ENCODE measurements at regions of chr14 and their contacts with region 1.

Region 1: DNA sequence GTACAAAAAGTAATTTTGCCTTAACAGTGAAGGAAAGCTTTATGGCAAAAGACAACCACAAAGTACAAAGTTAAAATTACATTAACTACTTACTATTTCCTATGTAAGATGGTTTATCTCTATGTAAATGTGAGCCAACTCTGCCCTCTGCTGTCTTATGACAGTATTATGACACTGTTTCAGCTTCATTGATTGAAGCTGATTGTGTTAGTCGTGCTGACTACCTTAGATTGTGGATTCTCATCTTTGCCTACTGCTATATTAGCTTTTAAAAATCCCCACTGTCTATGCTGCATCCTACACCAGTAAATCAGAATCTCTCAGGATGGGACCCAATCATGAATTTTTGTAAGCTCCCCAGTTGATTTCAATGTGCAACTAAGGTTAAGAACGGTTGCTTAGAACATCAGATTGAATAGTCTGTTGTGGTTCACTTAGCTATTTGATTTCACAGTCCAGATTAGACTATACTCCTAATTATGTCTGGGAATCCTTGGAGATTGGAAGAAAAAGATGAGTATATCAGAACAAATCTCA is 12.2 kb upstream of the SPTB start:
- DNase-seq: peak; percentile 38
- H3K4me3 ChIP-seq: no peak overlapping the region
- CTCF ChIP-seq: peak; percentile 38

Region 2: DNA sequence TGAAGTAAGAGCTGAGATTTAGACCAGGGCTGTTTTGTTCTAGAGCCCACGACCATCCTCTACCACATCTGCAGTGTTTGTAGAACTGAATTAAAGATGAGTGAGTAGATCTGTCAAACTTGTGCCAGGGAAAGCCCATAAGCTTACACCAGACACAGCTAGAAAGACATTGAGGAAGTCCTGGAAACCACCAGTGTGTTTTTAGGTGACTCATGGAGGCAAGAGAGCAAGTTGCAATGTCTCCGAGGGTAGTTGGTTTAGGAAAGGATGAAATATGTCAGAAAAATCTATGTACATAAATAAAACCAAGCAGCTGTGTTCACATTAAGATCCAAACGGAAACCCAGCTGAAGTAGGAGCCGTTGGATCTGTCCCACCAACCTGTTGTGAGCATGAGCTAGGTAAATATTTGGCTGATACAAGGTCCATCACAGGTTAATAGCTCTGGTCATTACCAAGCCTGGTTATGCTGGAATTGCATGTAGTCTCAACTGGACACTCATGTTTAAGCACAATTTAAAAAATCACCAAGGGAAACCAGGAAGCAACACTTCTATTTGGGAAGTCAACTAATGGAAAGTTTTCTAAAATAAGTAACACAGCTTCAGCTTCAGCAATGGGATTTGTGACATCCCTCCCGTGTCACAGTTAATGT is 237.5 kb before region 1 on chr14:
- CTCF ChIA-PET with region 1: interaction called, 10 read pairs
- POLR2A ChIA-PET with region 1: no interaction called
- DNase-seq: peak; percentile 87
- H3K4me3 ChIP-seq: no peak overlapping the region
- CTCF ChIP-seq: no peak

Region 3: DNA sequence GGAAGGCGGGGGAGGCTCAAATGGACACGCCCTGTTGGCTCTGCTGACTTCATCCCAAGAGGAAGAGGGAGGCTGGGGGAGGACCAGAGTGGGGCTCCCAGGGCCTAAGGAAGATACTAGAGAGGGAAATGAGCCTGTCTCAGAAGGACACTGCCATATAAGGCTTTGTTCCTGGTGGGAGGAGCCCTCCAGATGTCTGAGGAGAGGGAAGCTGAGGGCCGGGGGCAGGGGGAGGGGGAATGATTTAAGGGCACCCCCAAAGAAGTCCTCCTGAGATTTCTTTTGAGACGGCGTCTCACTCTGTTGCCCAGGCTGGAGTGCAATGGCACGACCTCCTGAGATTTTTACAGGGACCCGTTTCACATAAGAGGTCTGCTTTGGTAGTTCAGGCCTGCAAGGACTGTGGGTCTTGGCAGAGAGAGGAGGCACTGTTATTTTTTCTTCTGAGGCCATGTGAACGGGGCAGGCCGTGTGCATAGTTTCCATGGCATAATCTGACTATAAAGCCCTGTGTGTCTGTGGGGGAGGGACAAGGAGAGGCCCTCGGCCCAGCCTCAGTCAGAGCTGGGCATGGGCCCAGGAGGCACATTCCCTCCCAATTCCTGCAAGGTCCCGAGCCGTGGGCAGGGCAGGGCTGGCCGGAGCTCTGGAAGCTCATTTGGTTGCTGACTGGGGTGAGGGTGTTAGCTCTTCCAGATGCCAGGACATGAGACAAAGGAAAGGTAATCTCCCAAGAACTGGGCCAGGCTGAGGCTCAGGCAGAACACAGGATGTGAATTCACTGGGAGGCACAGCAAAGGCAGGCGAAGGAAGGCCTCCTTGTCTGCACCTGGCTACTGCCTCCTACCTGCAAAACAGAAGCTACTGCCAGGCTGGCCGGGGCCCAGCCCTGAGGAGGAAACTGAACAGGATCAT is 209.9 kb before region 1 on chr14:
- CTCF ChIA-PET with region 1: interaction called, 52 read pairs
- POLR2A ChIA-PET with region 1: no interaction called
- DNase-seq: no peak
- H3K4me3 ChIP-seq: no peak overlapping the region
- CTCF ChIP-seq: no peak

Region 4: GRCh38 chr14:64800000-64800399 is 91.9 kb before region 1 on chr14:
- CTCF ChIA-PET with region 1: interaction called, 221 read pairs
- POLR2A ChIA-PET with region 1: no interaction called
- DNase-seq: no peak
- H3K4me3 ChIP-seq: no peak overlapping the region
- CTCF ChIP-seq: peak; percentile 58

Region 5: GRCh38 chr14:64823305-64823861 is 68.5 kb before region 1 on chr14:
- CTCF ChIA-PET with region 1: interaction called, 419 read pairs
- POLR2A ChIA-PET with region 1: interaction called, 3 read pairs
- DNase-seq: no peak
- H3K4me3 ChIP-seq: no peak overlapping the region
- CTCF ChIP-seq: peak; percentile 96

Region 6: GRCh38 chr14:64880221-64881121 is 11.4 kb before region 1 on chr14:
- CTCF ChIA-PET with region 1: interaction called, 104 read pairs
- POLR2A ChIA-PET with region 1: no interaction called
- DNase-seq: no peak
- H3K4me3 ChIP-seq: peak overlapping the region; percentile 42
- CTCF ChIP-seq: no peak